Breast epithelium (tissue), 4 donors: ENCODE measurements at regions of chr11 and their contacts with region 1.

Region 1: GRCh38 chr11:85759915-85760314 is 51.0 kb downstream of the SYTL2 start:
- DNase-seq: no peak
- H3K4me3 ChIP-seq: no peak overlapping the region
- H3K27ac ChIP-seq: no peak overlapping the region
- H3K4me1 ChIP-seq: no peaks in the 10 kb centered on the region
- H3K27me3 ChIP-seq: no peaks in the 10 kb centered on the region
- CTCF ChIP-seq: no peak
- POLR2A ChIP-seq: no peak

Region 2: GRCh38 chr11:85772695-85773094 is 12.8 kb after region 1 on chr11:
- intact Hi-C with region 1: no loop called
- DNase-seq: no peak
- H3K4me3 ChIP-seq: no peak overlapping the region
- H3K27ac ChIP-seq: no peak overlapping the region
- H3K4me1 ChIP-seq: no peaks in the 10 kb centered on the region
- H3K27me3 ChIP-seq: no peaks in the 10 kb centered on the region
- CTCF ChIP-seq: no peak
- POLR2A ChIP-seq: no peak

Region 3: GRCh38 chr11:86274503-86274902 is 514.6 kb after region 1 on chr11:
- intact Hi-C with region 1: loop called (anchors 5 kb)
- DNase-seq: no peak
- H3K4me3 ChIP-seq: no peak overlapping the region
- H3K27ac ChIP-seq: no peak overlapping the region
- H3K4me1 ChIP-seq: no peaks in the 10 kb centered on the region
- H3K27me3 ChIP-seq: no peaks in the 10 kb centered on the region
- CTCF ChIP-seq: no peak
- POLR2A ChIP-seq: no peak